Right lobe of liver (tissue), 6 donors: ENCODE measurements at regions of chr11 and their contacts with region 1.

Region 1: DNA sequence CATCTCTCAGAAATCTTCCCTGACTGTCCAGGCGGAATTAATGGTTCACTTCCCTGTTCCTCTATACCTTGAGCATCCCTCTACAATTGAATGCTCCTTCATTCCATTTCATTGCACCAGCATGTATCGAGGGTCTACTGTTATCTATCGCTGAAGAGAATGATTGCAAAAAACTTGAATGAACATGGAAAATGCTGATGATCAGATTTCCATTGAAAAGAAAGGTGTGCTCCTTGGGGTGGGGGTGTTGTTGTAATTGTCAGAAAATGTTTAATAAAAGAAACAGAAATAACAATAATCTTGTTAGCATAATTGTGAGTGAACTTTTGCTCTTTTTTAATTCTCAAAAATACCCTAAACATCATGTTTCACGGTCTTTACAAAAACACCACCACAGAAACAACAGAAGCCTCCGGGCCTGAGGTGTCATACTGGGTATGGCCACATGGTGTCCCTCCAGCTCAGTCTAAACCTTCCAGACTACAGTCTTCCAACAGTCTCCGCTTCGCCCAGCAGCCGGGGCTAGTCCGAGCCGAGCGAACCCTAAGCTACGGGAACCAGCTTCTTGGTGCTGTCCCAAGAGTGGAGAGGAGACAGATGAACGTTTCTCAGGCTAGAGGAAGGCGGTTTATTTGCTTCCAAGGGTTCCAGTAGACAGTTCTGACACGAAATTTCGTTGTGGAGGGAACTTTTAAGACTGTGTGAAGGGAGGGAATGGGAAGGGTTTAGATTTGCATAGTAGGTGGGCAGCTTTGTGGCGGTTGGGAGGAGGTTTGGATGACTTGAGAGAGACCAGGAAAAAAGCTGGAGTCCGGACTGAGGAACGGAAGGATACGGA is 75.8 kb upstream of the ZBED5 start:
- DNase-seq: peak; percentile 85 to 86 (median 85)
- ATAC-seq: peak; percentile 92 to 97 (median 96)
- H3K4me3 ChIP-seq: peak overlapping the region; percentile 12 to 27 (median 27)
- H3K27ac ChIP-seq: no peak overlapping the region
- H3K4me1 ChIP-seq: peaks cover 0 to 7% (median 3%) of the 10 kb centered on the region in 4 donors
- H3K27me3 ChIP-seq: no peaks in the 10 kb centered on the region
- CTCF ChIP-seq: peak; percentile 93 to 96 (median 94)
- POLR2A ChIP-seq: no peak

Region 2: DNA sequence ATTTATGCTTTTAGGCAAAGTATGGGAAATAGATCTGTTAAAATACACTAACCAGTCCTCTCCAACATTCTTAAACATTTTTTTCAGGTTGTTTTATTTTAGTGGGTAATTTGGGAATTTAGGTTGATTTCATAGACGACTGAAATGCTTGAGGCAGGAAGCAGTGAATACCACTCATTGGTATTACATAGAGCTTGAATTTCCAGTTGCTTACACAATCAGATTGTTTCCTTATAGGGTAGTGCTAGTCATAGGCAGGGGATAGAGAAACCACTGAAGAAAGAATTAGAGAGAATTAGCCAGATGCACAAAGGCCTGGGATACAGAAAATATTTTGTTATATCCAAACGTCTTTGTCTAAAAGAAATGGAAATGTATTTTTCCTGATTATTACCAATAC is 341.3 kb before region 1 on chr11:
- intact Hi-C with region 1: no loop called
- DNase-seq: no peak
- ATAC-seq: peak in 3 of 4 donors; percentile 47 to 72 (median 69)
- H3K4me3 ChIP-seq: no peak overlapping the region
- H3K27ac ChIP-seq: no peak overlapping the region
- H3K4me1 ChIP-seq: no peaks in the 10 kb centered on the region
- H3K27me3 ChIP-seq: no peaks in the 10 kb centered on the region
- CTCF ChIP-seq: no peak
- POLR2A ChIP-seq: no peak

Region 3: DNA sequence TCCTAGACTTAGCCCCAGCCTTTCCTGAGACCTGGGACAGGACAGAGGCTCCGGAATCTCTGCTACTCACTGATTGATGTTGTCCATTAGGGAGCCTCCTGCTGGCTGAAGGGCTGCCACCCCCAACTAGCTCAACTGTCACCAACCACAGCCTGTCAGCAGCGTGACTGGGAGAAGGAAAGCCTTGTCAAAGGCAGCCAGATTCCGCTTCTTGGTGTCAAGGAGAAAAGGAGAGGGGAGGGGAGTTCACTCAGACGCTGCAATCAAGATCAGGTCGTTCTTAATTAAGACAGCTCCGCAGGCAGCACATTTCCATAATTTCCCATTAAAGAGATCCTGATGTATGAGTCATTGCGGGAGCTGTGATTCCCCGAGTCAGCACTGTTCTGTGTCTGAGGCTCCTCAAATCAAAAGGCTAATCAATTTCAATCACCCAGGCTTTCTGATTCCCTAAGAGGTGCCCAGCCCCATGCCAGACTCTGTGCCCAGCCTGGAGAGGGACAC is 77.0 kb after region 1 on chr11:
- intact Hi-C with region 1: loop called in 1 of 2 experiments (anchors 10 kb)
- DNase-seq: peak in 2 of 3 donors; percentile 39 to 61
- ATAC-seq: peak; percentile 81 to 98 (median 90)
- H3K4me3 ChIP-seq: no peak overlapping the region
- H3K27ac ChIP-seq: no peak overlapping the region
- H3K4me1 ChIP-seq: no peaks in the 10 kb centered on the region
- H3K27me3 ChIP-seq: no peaks in the 10 kb centered on the region
- CTCF ChIP-seq: peak; percentile 34 to 48 (median 40)
- POLR2A ChIP-seq: no peak

Region 4: DNA sequence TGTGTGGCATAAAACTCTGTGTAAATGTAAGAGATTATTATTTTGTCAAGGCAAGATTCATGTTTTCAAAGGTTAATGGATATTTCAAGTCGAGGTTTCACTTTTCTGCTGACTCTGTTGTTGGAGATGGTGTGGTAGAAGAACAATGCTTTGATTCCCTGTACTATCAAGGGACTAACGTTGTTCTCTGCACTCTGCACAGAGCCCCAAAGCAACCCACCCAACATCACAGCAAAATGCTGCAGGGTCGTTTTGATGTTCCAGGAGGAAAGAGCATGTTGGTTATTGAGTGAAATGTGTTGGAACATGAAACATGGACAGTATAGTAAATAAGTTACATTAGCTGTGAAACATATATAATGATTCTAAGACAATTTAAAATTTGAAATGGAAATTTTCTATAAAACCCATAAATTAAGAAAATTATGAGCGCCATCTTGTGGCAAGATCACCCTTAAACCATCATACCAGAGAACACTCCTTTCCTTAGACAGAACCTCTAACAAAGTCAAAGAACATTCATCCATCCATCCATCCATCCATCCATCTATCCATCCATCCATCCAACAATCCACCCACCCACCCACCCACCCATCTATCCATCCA is 88.6 kb after region 1 on chr11:
- intact Hi-C with region 1: loop called (anchors 5 to 10 kb)
- DNase-seq: no peak
- ATAC-seq: peak in 2 of 4 donors; percentile 42 to 60
- H3K4me3 ChIP-seq: no peak overlapping the region
- H3K27ac ChIP-seq: no peak overlapping the region
- H3K4me1 ChIP-seq: no peaks in the 10 kb centered on the region
- H3K27me3 ChIP-seq: no peaks in the 10 kb centered on the region
- CTCF ChIP-seq: peak; percentile 35 to 53 (median 42)
- POLR2A ChIP-seq: no peak

Region 5: GRCh38 chr11:11313426-11313825 is 379.8 kb after region 1 on chr11:
- intact Hi-C with region 1: no loop called
- DNase-seq: peak in 1 of 3 donors; percentile 57
- ATAC-seq: peak in 3 of 4 donors; percentile 53 to 86 (median 72)
- H3K4me3 ChIP-seq: no peak overlapping the region
- H3K27ac ChIP-seq: peak overlapping the region in 1 of 3 donors; percentile 43
- H3K4me1 ChIP-seq: peaks cover 0 to 20% (median 0%) of the 10 kb centered on the region in 4 donors
- H3K27me3 ChIP-seq: no peaks in the 10 kb centered on the region
- CTCF ChIP-seq: no peak
- POLR2A ChIP-seq: no peak